ENCODE measurements at regions of chr20 and their contacts with region 1.

Region 1: DNA sequence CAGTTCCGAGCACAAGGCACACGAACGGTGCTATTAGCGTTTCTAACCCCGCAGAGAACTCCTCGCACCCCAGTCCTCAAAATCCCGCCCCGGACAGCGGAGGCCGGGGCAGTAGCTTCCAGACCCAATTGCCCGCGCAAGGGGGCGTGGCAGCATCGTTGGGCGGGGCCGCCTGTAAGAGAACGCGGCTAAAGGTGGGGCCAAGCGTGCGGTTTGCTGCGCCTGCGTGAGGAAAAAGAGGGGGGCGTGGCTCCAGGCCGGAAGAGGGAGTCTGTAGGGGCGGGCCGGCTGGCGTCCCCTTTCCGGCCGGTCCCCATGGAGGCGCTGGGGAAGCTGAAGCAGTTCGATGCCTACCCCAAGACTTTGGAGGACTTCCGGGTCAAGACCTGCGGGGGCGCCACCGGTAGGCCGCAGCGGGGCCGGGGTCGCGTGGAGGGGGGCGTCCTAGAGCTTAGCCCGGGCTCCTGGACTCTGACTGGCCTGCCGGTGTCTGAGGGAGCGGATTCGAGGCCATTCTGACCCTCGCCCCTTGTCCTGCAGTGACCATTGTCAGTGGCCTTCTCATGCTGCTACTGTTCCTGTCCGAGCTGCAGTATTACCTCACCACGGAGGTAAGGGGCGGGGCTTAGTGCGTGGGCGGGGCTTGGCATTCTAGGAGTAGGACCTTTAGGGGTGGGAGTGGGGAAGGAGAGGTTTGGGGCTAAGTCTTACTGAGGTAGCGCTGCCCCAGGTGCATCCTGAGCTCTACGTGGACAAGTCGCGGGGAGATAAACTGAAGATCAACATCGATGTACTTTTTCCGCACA is at the start of gene ERGIC3:
- DNase-seq: peak; percentile 94

Region 2: DNA sequence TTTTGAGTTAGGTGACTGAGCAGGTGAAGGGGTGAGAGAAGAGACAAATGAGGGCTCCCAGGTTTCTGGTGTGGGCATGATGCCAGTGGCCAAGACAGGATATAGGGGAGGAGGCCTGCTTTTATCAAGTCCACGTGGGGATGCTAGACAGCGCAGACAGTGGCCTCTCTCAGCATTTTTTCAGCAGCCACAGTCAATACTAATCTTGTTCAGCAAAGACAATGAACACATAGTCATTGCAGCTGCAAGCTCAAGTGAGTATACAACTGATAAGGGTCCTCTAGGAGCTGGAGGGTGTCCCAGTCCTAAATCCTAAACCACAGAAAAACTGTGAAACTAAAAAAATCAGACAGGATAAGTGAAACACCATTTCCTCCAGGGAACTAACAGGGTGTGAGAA is 178.8 kb before region 1 on chr20:
- CTCF ChIA-PET with region 1: no interaction called
- POLR2A ChIA-PET with region 1: no interaction called
- DNase-seq: no peak

Region 3: GRCh38 chr20:35385733-35386132 is 156.3 kb before region 1 on chr20:
- CTCF ChIA-PET with region 1: no interaction called
- POLR2A ChIA-PET with region 1: no interaction called
- DNase-seq: no peak

Region 4: DNA sequence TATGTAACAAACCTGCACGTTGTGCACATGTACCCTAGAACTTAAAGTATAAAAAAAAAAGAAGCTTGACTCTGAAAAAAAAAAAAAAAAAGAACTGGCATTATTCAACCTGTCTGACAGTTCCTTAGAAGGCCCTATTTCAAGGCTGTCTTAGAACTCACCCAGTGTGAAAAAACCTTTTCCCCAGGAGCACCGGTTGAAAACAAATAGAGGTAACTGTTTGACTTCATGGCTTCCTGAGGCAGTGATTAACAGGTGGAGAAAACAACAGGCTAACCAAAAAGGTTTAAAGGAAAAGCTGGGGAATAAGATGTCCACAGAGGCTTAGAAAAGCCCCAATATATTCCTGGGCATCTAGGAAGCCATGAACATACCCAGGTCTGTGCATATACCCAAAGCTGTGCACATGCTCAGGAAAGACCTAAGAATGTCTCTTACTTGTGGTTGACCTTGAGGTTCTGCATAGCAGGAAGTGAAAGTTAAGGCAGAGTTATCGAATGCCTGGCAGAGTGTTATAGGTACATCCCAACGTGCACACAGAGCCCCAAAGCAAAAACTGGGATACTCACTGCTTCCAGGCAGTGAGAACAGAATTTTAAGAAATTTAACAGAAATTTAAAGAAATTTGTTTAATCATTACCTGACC is 137.2 kb before region 1 on chr20:
- CTCF ChIA-PET with region 1: no interaction called
- POLR2A ChIA-PET with region 1: no interaction called
- DNase-seq: no peak

Region 5: GRCh38 chr20:35559047-35559995 is 17.3 kb after region 1 on chr20:
- CTCF ChIA-PET with region 1: no interaction called
- POLR2A ChIA-PET with region 1: interaction called, 20 read pairs
- DNase-seq: no peak

Region 6: DNA sequence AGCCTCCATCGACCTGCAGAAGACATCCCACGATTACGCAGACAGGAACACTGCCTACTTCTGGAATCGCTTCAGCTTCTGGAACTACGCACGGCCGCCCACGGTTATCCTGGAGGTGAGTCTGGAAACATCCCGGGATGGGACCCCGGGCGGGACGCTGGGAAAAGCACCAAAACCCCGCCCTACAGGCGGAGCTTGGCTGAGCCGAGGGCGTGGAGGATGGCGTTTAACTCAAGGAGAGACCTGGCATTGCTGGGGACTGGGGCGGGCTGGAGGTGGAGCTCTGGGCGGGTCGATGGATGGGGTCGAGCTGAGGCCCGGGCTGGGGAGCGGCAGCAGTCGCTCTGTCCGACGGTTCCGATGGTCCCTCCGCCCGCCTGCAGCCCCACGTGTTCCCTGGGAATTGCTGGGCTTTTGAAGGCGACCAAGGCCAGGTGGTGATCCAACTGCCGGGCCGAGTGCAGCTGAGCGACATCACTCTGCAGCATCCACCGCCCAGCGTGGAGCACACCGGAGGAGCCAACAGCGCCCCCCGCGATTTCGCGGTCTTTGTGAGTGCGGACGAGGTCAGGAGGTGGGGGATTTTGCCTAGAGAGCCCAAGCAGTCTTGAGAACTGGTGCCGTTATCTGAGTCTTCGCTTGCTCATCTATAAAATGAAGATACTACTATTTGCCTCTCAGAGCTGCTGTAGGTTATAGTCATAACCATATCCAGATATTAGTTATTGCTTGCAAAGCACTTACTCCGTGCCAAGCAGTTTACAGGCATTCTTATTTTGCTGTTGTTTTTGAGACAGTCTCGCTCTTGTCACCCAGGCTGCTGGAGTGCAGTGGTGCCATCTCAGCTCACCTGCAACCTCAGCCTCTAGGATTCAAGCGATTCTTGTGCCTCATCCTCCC is 77.5 kb after region 1 on chr20:
- CTCF ChIA-PET with region 1: interaction called, 3 read pairs
- POLR2A ChIA-PET with region 1: interaction called, 22 read pairs
- DNase-seq: peak; percentile 75

Region 7: DNA sequence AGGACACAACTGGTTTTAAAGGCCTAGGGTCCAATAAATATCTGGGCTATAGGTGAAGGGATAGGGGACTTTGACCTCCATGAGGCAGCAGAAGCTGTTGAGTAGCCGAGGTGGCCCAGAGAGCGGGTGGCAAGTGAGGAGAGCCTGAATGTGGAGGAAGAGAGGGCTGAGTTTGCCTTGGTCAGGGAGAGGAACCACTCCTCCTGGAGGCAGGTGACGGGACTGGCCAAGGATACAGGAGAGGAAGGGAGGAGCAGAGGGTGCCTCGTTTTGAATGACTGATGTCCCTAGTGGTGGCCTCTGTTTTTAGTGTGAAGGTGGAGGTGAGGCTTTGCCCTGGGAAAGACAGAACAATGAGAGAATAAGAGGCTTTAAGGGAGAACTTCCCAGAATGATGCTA is 675.2 kb after region 1 on chr20:
- CTCF ChIA-PET with region 1: no interaction called
- POLR2A ChIA-PET with region 1: no interaction called
- DNase-seq: peak; percentile 53

Measured in HEK293T (cell line).